KBM-7 (cell line): ENCODE measurements at regions of chr15 and their contacts with region 1.

Region 1: DNA sequence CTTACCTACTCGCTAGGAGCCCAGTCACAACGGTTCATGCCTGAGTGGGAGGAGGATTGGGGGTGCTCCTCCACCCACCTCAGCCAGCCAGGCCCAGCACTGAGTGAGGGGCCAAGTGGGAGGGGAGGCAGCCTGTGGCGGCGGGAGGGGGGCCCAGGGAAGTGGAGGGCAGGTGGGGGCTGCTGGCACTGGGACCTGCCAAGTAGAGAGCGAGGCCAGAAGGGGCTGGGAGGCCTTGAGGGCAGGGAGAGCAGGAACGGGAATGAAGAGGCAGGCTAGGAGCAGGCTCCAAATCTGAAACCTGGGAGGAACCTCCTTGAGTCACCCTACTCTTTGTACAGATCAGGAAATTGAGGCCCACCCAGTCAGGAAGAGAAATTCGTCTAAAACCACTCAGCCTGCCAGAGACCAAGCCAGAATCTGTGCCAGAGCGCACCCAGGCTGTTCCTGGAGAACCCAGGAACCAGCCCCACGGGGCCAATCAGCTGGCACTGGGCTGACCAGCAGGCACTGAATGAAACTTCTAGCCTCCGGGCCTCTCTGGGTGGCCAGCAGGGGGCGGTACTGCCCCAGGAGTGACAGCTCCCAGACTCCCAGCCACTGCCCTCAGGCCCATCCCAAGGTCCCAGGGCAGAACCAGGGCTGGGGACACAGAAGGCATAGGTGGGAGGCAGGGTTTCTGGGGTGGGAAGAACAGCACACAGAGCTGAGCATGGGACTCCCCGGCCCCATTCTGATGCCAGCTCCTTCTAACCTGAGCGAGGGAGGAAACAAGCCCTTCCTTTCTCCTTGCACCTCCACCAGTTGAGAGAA is 14.8 kb upstream of the CYP11A1 start:
- DNase-seq: peak; percentile 93

Region 2: GRCh38 chr15:73822998-73823397 is 559.2 kb before region 1 on chr15:
- in situ Hi-C with region 1: no loop called
- DNase-seq: peak; percentile 9

Region 3: GRCh38 chr15:73891328-73892315 is 490.6 kb before region 1 on chr15:
- in situ Hi-C with region 1: no loop called
- DNase-seq: no peak

Region 4: GRCh38 chr15:74433592-74434262 is 51.5 kb after region 1 on chr15 and contains the start of gene SEMA7A:
- in situ Hi-C with region 1: loop called (anchors 10 kb)
- DNase-seq: peak; percentile 90

Region 5: DNA sequence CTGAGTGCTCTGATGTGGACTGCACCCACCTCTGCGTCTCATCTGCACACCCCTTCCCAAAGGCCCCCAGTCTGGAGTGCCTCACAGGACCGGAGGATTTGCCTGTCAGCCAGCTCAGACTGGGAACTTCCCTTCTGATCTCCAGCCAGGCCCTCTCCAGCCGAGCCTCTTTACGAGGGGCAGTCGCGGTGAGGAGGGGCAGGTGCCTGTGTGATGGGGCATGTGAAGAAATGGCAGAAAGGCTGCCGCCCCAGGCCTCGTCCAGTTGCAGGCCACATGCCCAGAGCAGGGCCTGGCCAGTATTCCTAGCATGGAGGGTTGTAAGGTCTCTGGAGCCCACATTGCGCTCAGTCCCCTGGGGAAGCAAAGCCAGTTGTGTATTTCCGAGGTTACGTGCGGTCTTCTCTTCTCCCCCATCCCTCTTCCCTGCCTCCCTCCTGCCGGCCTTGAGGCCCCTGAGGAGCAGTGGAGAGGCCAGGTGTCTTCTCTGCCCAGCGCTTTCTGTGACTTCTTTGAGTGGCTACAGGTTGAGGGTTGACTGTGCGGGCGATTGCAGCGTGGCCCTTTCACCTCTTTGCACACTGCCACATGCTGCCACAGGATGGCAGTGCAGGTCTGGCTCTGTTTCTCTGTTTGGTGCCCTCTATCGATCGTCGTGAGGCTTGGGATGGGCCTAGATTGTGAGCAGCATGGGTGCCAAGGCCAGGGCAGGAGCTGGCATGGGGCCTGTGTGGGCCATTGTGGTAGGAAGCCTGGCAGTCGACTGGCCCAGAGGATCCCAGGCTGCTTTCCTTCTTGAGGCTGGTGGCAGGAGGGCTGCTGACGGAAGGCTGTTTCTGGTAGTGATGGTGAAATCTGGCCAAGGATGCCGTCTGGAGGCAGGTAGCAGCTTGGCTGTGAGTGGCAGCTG is 238.7 kb after region 1 on chr15:
- in situ Hi-C with region 1: loop called (anchors 10 kb)
- DNase-seq: peak; percentile 93

Region 6: DNA sequence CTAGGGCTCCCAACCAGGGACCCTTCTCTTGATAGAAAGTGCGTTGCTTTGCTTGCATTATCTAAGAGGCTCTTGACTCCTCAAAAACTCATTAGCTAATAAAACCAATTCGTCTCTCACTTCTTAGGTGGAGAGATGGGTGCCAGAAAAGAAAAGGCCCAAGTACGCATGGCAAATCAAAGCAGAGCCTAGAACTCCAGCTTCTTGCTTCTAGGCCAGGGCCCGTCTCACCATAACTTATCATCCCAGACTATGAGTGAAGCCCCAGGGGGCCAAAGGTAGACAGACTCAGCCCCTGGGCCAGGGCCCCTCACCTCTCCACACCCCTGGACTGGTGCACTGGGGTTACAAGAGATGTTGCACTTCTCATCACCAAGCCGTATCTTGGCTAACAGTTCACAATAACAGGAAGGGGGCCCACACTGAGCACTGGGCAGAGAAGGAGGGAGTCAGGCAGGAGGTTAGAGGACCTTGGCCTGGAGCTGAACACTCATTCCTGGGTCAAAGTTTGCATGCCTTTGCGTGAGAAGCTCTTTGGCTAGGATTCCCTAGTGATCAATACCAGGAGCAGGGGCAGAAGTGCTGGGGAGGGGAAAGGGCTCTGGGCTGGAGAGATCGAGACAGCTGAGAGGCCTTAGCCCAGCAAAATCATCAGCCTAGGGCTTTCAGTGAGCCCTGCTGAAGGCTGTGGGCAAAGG is 348.6 kb after region 1 on chr15:
- in situ Hi-C with region 1: no loop called
- DNase-seq: no peak